ENCODE measurements at regions of chr1 and their contacts with region 1.

Region 1: GRCh38 chr1:10398734-10399623 is at the start of gene PGD:
- DNase-seq: peak; percentile 91 to 98 (median 97)
- ATAC-seq: peak; percentile 97
- H3K4me3 ChIP-seq: peak within 1 kb of the TSS; percentile 86 to 97
- H3K4me3 Mint-ChIP-seq: peak within 1 kb of the TSS; percentile 97
- H3K27ac ChIP-seq: peak within 1 kb of the TSS; percentile 57 to 67
- H3K27ac Mint-ChIP-seq: peak within 1 kb of the TSS; percentile 77
- H3K4me1 ChIP-seq: peaks cover 16% of the 10 kb centered on the region
- H3K4me1 Mint-ChIP-seq: peaks cover 22% of the 10 kb centered on the region
- H3K27me3 ChIP-seq: no peaks in the 10 kb centered on the region
- H3K27me3 Mint-ChIP-seq: no peaks in the 10 kb centered on the region
- CTCF ChIP-seq: no peak
- total RNA-seq, gene PGD: 20.2 to 21.7 TPM

Region 2: DNA sequence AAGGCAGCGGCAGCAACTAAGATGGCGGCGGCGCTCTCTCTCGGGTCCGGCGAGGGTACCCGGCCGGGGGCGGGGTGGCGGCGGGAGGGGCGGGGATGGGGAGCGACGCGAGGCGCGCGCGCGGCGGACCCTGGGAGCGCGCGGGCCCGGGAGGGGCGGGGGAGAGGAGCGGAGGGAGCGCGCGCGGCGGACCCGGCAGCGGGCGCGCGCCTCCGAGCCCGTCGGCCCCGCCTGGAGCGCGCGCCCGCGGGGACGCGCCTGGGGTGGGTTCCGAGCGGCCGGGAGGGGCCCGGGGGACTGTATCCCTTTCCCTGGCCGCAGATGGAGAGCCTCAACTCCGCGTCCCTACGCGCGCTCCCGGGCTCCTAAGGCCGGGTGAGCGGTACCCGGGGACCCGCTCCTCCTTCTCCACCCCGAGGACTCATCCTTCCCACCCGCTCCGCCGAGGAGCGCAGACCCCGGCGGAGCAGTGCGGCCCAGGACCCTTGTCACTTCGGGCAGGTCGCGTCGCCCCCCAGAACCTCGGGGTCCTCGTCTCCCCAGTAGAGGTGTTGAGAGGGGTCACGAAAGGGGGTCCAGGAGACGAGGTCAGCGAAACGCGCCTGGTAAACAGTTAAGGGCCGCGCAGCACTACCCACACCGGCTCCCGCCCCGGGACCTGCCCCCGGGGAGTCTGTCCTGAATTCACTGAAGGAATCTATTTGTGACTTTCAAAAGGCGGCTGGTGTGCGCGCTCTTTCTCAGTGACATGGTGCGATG is 574.9 kb before region 1 on chr1 and contains the start of gene CLSTN1:
- CTCF ChIA-PET with region 1: no interaction called
- POLR2A ChIA-PET with region 1: no interaction called
- intact Hi-C with region 1: loop called in 1 of 2 experiments (anchors 2 kb)
- DNase-seq: peak; percentile 76 to 93 (median 91)
- ATAC-seq: peak; percentile 72
- H3K4me3 ChIP-seq: peak within 1 kb of the TSS; percentile 58 to 72
- H3K4me3 Mint-ChIP-seq: peak within 1 kb of the TSS; percentile 96
- H3K27ac ChIP-seq: peak within 1 kb of the TSS; percentile 37 to 76
- H3K27ac Mint-ChIP-seq: peak within 1 kb of the TSS; percentile 89
- H3K4me1 ChIP-seq: peaks cover 36% of the 10 kb centered on the region
- H3K4me1 Mint-ChIP-seq: peaks cover 43% of the 10 kb centered on the region
- H3K27me3 ChIP-seq: no peaks in the 10 kb centered on the region
- H3K27me3 Mint-ChIP-seq: no peaks in the 10 kb centered on the region
- CTCF ChIP-seq: no peak
- total RNA-seq, gene CLSTN1: 50.0 to 51.1 TPM

Region 3: GRCh38 chr1:10387413-10388079 is 11.4 kb before region 1 on chr1:
- CTCF ChIA-PET with region 1: interaction called, 5 read pairs
- POLR2A ChIA-PET with region 1: interaction called, 11 read pairs
- intact Hi-C with region 1: loop called in 1 of 2 experiments (anchors 1 kb)
- DNase-seq: no peak
- ATAC-seq: no peak
- H3K4me3 ChIP-seq: no peak overlapping the region
- H3K4me3 Mint-ChIP-seq: no peak overlapping the region
- H3K27ac ChIP-seq: no peak overlapping the region
- H3K27ac Mint-ChIP-seq: no peak overlapping the region
- H3K4me1 ChIP-seq: no peaks in the 10 kb centered on the region
- H3K4me1 Mint-ChIP-seq: peaks cover 5% of the 10 kb centered on the region
- H3K27me3 ChIP-seq: no peaks in the 10 kb centered on the region
- H3K27me3 Mint-ChIP-seq: no peaks in the 10 kb centered on the region
- CTCF ChIP-seq: no peak